Activated B cell treated with CpG ODN at 0.5 μM for 24 hours (primary cell): ENCODE measurements at regions of chr5 and their contacts with region 1.

Region 1: DNA sequence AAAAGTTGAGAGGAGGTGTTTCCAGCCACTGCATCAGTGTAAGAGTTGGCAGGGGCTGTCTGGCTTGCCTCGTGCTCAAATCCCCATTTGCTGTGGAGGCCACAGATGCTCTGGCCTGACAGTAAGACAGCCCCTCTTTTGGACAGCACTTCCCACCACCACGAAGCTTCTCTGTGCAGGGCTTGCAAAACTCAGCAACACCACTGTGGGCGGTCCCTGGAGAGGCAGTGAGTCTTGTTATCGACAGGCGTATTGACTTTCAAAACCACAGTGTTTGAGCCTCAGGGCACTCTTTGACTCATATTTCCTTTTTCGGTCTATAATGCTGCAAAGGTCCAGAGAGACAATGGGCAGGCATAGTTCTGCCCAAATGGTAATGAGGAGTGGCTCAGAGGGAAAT is 539.5 kb downstream of the EBF1 start:
- DNase-seq: peak; percentile 48
- ATAC-seq: peak; percentile 92
- H3K4me3 Mint-ChIP-seq: peak overlapping the region; percentile 68
- H3K27ac Mint-ChIP-seq: peak overlapping the region; percentile 61
- H3K4me1 Mint-ChIP-seq: peaks cover 52% of the 10 kb centered on the region
- H3K27me3 Mint-ChIP-seq: no peaks in the 10 kb centered on the region
- CTCF ChIP-seq: no peak

Region 2: DNA sequence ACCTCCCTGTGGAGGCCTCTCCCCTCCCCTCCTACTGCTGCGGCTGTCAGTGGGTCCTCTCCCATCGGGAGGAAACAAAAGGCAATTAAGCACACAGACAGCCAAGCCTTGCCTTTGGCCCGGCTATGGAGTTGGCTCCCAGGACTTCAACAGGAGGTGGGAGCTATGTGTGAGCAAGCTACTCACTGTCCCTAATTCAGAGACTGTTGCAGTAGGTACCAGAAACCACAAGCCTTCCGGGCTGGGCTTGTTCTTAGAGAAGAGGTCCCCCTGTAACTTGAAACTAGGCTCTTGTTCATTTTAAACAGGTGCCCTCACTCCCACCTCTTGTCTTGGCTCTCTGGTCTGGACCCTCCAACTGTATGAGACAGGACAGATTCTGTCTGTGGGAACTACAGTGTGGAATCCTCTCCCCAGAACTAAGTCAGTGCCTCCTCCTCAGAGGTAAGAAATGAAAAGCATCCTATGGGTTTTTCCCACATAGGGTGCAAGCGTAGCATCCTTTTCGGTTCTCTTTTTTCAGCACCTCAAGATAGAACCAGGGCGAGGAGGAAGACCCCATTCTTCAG is 21.6 kb before region 1 on chr5:
- CTCF ChIA-PET with region 1: no interaction called
- POLR2A ChIA-PET with region 1: interaction called, 3 read pairs
- intact Hi-C with region 1: loop called (anchors 2 kb)
- DNase-seq: no peak
- ATAC-seq: peak; percentile 83
- H3K4me3 Mint-ChIP-seq: peak overlapping the region; percentile 67
- H3K27ac Mint-ChIP-seq: peak overlapping the region; percentile 35
- H3K4me1 Mint-ChIP-seq: peaks cover 29% of the 10 kb centered on the region
- H3K27me3 Mint-ChIP-seq: peaks cover 1% of the 10 kb centered on the region
- CTCF ChIP-seq: no peak

Region 3: GRCh38 chr5:158599157-158599556 is 39.0 kb after region 1 on chr5:
- CTCF ChIA-PET with region 1: no interaction called
- POLR2A ChIA-PET with region 1: interaction called, 3 read pairs
- intact Hi-C with region 1: loop called (anchors 5 kb)
- DNase-seq: no peak
- ATAC-seq: no peak
- H3K4me3 Mint-ChIP-seq: no peak overlapping the region
- H3K27ac Mint-ChIP-seq: no peak overlapping the region
- H3K4me1 Mint-ChIP-seq: peaks cover 31% of the 10 kb centered on the region
- H3K27me3 Mint-ChIP-seq: no peaks in the 10 kb centered on the region
- CTCF ChIP-seq: no peak

Region 4: DNA sequence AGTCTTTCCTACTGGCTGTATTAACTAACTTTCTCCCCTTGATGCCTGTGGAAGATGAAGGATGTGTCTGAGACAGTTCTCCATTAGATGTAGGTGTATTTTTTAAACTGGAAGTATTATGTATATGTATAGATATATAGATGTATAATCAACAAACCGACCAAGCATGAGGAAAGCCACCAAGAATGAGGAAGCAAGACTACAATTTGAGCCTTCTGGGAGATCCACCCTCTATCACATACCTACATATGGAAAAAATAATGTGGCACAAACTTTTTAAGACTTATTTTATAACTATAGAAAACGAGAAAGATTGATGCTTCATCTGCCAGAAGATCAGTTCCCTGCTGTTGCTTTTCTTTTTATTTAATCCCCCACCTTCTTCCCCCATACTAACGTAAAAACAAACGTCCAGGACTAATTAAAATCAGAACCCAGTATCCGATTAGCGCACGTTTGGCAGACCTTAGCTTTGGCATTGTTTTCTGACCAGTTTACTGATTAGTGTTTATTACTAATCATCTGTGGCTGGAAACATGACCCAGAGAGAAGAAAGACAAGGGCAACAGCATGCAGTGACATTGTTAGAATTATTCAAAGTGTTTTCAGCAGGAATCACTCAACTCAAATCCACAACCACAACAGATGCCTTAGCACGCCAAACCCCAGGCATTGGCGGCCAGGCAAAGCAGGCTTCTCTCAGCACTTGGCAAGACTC is 49.3 kb after region 1 on chr5:
- CTCF ChIA-PET with region 1: no interaction called
- POLR2A ChIA-PET with region 1: no interaction called
- intact Hi-C with region 1: no loop called
- DNase-seq: no peak
- ATAC-seq: peak; percentile 40
- H3K4me3 Mint-ChIP-seq: no peak overlapping the region
- H3K27ac Mint-ChIP-seq: no peak overlapping the region
- H3K4me1 Mint-ChIP-seq: peaks cover 8% of the 10 kb centered on the region
- H3K27me3 Mint-ChIP-seq: peaks cover 5% of the 10 kb centered on the region
- CTCF ChIP-seq: no peak